IMR-90 (cell line): ENCODE measurements at regions of chr5 and their contacts with region 1.

Region 1: GRCh38 chr5:115472271-115473025 is 72.1 kb downstream of the FEM1C start:
- DNase-seq: no peak
- ATAC-seq: no peak
- H3K4me3 ChIP-seq: no peak overlapping the region
- H3K27ac ChIP-seq: no peak overlapping the region
- H3K4me1 ChIP-seq: peaks cover 2% of the 10 kb centered on the region; the same call in 1 of the 2 replicates
- H3K27me3 ChIP-seq: no peaks in the 10 kb centered on the region
- CTCF ChIP-seq: no peak
- POLR2A ChIP-seq: no peak
- RAD21 ChIP-seq: no peak

Region 2: GRCh38 chr5:115423541-115423940 is 48.9 kb before region 1 on chr5:
- CTCF ChIA-PET with region 1: no interaction called
- POLR2A ChIA-PET with region 1: no interaction called
- dilution Hi-C with region 1: no loop called
- in situ Hi-C with region 1: no loop called
- intact Hi-C with region 1: no loop called
- DNase-seq: no peak
- ATAC-seq: no peak
- H3K4me3 ChIP-seq: no peak overlapping the region
- H3K27ac ChIP-seq: no peak overlapping the region
- H3K4me1 ChIP-seq: peaks cover 10% of the 10 kb centered on the region
- H3K27me3 ChIP-seq: no peaks in the 10 kb centered on the region
- CTCF ChIP-seq: no peak
- POLR2A ChIP-seq: no peak
- RAD21 ChIP-seq: no peak

Region 3: DNA sequence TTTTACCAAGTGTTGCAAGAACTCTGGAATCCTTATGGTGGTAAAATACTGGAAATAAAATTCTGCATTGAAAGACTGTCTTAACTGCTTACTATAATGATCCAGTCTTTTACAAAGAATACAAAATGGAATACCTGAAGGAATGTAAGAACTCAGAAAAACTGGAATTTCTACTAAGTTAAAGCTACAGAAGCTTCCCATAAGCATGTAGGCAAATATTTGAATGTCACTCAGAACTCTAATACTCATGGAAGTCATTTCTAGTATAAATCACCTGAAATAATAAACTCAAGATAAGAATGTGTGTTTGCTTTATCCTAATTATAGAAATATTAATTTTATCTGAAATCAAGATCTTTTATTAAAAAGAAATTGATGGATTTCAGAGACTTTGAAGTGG is 17.3 kb after region 1 on chr5:
- CTCF ChIA-PET with region 1: no interaction called
- POLR2A ChIA-PET with region 1: interaction called, 14 read pairs
- dilution Hi-C with region 1: no loop called
- in situ Hi-C with region 1: no loop called
- intact Hi-C with region 1: no loop called
- DNase-seq: no peak
- ATAC-seq: no peak
- H3K4me3 ChIP-seq: no peak overlapping the region
- H3K27ac ChIP-seq: no peak overlapping the region
- H3K4me1 ChIP-seq: no peaks in the 10 kb centered on the region
- H3K27me3 ChIP-seq: peaks cover 2% of the 10 kb centered on the region; the same call in 1 of the 2 replicates
- CTCF ChIP-seq: no peak
- POLR2A ChIP-seq: no peak
- RAD21 ChIP-seq: no peak

Region 4: DNA sequence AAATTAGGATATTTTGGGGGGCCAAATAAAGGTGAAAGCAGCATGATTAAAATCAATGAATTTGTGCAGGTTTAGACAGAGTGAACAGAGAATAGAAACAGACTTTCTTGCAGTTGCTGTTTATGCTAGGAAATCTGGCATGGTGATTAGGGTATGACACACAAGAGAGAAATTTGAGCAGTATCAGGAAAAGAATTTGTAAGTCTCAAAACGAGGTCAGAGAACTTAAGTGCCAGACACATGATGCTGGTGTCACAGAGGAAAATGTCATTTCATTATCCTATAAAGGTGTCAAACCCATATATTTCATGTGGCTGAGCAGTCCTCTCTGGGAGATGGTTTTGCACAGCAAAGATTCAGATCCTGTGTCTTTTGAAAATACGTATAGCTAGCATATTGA is 505.5 kb after region 1 on chr5:
- CTCF ChIA-PET with region 1: no interaction called
- POLR2A ChIA-PET with region 1: no interaction called
- dilution Hi-C with region 1: no loop called
- in situ Hi-C with region 1: no loop called
- intact Hi-C with region 1: no loop called
- DNase-seq: peak; percentile 92
- ATAC-seq: peak; percentile 82
- H3K4me3 ChIP-seq: no peak overlapping the region
- H3K27ac ChIP-seq: no peak overlapping the region; the same call in 1 of the 2 replicates
- H3K4me1 ChIP-seq: peaks cover 17% of the 10 kb centered on the region
- H3K27me3 ChIP-seq: no peaks in the 10 kb centered on the region
- CTCF ChIP-seq: no peak
- POLR2A ChIP-seq: no peak
- RAD21 ChIP-seq: no peak